ENCODE measurements at regions of chr17 and their contacts with region 1.

Region 1: DNA sequence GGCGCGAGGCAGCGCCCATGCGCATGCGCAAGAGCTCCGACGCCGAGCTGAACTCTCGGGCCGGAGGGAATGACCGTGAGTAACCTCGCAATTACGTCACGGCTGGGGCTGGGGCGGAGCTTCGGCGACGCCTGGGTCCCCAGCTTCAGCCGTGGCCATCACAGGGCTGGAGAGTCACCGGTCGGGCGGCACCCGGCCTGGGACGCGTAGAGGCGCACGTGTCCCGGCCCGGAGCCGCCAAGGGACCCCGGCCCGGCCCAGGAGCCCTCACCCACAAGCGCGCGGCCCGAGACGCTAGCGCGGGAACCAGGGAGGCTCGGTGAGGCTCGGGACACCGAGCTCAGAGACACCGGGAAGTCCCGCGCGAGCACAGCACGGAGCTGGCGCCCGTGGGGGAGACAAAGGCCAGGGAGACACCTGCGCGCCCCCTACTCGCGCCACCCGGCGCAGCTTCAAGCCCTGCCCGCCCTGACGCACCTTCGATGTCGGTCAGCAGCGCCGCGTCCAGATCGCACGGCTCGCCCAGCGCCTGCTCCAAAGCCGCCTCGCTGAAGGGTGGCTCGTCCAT is 452 bp downstream of the SREBF1 start:
- DNase-seq: peak; percentile 86 to 99 (median 97)
- ATAC-seq: peak; percentile 73 to 78 (median 76)
- H3K4me3 ChIP-seq: peak overlapping the region; percentile 63 to 92
- H3K4me3 Mint-ChIP-seq: peak overlapping the region; percentile 76 to 96 (median 77)
- H3K27ac ChIP-seq: peak overlapping the region; percentile 98
- H3K27ac Mint-ChIP-seq: peak overlapping the region; percentile 88 to 91
- H3K4me1 ChIP-seq: peaks cover 44 to 82% of the 10 kb centered on the region in 2 experiments
- H3K4me1 Mint-ChIP-seq: peaks cover 60 to 73% (median 70%) of the 10 kb centered on the region in 3 donors
- H3K27me3 ChIP-seq: no peaks in the 10 kb centered on the region
- H3K27me3 Mint-ChIP-seq: no peaks in the 10 kb centered on the region

Region 2: GRCh38 chr17:17768424-17769088 is 67.8 kb before region 1 on chr17:
- CTCF ChIA-PET with region 1: no interaction called
- POLR2A ChIA-PET with region 1: no interaction called
- DNase-seq: no peak
- ATAC-seq: no peak
- H3K4me3 ChIP-seq: no peak overlapping the region
- H3K4me3 Mint-ChIP-seq: no peak overlapping the region
- H3K27ac ChIP-seq: no peak overlapping the region
- H3K27ac Mint-ChIP-seq: no peak overlapping the region
- H3K4me1 ChIP-seq: peaks cover 9 to 15% of the 10 kb centered on the region in 2 experiments
- H3K4me1 Mint-ChIP-seq: peaks cover 26 to 28% (median 27%) of the 10 kb centered on the region in 3 donors
- H3K27me3 ChIP-seq: no peaks in the 10 kb centered on the region
- H3K27me3 Mint-ChIP-seq: no peaks in the 10 kb centered on the region

Region 3: GRCh38 chr17:17824783-17825614 is 11.3 kb before region 1 on chr17:
- CTCF ChIA-PET with region 1: interaction called, 4 read pairs
- POLR2A ChIA-PET with region 1: interaction called, 5 to 19 read pairs
- DNase-seq: peak in 1 of 35 experiments; percentile 17
- ATAC-seq: no peak
- H3K4me3 ChIP-seq: no peak overlapping the region
- H3K4me3 Mint-ChIP-seq: peak overlapping the region; percentile 28 to 76 (median 51)
- H3K27ac ChIP-seq: peak overlapping the region; percentile 98
- H3K27ac Mint-ChIP-seq: peak overlapping the region; percentile 83 to 90
- H3K4me1 ChIP-seq: peaks cover 49 to 87% of the 10 kb centered on the region in 2 experiments
- H3K4me1 Mint-ChIP-seq: peaks cover 83 to 91% (median 85%) of the 10 kb centered on the region in 3 donors
- H3K27me3 ChIP-seq: no peaks in the 10 kb centered on the region
- H3K27me3 Mint-ChIP-seq: no peaks in the 10 kb centered on the region

Region 4: GRCh38 chr17:17849845-17850373 is 13.6 kb after region 1 on chr17:
- CTCF ChIA-PET with region 1: interaction called in 1 of 2 experiments, 16 read pairs
- POLR2A ChIA-PET with region 1: interaction called, 4 to 25 read pairs
- DNase-seq: peak; percentile 33 to 84 (median 73)
- ATAC-seq: peak; percentile 36 to 68 (median 50)
- H3K4me3 ChIP-seq: no peak overlapping the region
- H3K4me3 Mint-ChIP-seq: peak overlapping the region in 2 of 3 donors; percentile 14 to 76
- H3K27ac ChIP-seq: peak overlapping the region; percentile 93
- H3K27ac Mint-ChIP-seq: peak overlapping the region; percentile 97
- H3K4me1 ChIP-seq: peaks cover 43 to 71% of the 10 kb centered on the region in 2 experiments
- H3K4me1 Mint-ChIP-seq: peaks cover 74 to 78% (median 76%) of the 10 kb centered on the region in 3 donors
- H3K27me3 ChIP-seq: no peaks in the 10 kb centered on the region
- H3K27me3 Mint-ChIP-seq: no peaks in the 10 kb centered on the region

Measured in T-cell (primary cell).